Adrenal gland (tissue), 19 donors: ENCODE measurements at regions of chr20 and their contacts with region 1.

Region 1: DNA sequence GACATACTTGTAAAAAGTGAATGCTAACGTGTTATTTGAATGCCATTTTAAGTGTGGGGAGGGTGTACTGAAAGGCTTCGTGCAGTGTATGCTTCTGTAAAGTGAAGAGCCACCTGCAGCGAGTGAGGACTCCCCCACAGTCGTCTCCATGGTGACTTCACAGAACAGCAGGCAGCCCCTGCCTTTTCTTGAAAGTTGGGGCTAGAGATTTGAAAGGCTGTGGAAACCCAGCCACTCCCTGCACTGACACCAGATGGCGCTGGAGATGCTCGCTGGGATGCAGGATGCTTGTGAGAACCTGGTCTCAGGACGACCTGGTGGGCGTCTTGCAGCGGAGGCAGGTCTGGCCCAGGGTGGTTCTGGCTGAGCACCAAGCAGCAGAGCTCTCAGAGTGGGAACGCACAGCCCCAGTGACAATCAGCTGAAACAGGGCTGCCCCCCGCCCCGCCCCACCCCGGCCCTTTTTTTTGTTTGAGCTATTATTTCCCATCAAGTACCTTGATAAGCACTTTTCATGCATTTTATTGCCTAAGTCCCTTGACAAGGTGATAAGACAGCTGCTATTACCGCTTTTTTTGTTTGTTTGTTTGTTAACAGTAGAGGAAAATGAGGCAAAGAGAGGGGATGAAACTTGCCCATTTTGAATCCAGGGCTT is 150.3 kb downstream of the SYCP2 start:
- DNase-seq: peak in 6 of 7 donors; percentile 35 to 75 (median 41)
- H3K4me3 ChIP-seq: no peak overlapping the region
- H3K27ac ChIP-seq: no peak overlapping the region
- H3K4me1 ChIP-seq: no peaks in the 10 kb centered on the region
- H3K27me3 ChIP-seq: peaks cover 3% of the 10 kb centered on the region
- CTCF ChIP-seq: peak in 5 of 6 experiments; percentile 51 to 73 (median 61)
- POLR2A ChIP-seq: no peak

Region 2: DNA sequence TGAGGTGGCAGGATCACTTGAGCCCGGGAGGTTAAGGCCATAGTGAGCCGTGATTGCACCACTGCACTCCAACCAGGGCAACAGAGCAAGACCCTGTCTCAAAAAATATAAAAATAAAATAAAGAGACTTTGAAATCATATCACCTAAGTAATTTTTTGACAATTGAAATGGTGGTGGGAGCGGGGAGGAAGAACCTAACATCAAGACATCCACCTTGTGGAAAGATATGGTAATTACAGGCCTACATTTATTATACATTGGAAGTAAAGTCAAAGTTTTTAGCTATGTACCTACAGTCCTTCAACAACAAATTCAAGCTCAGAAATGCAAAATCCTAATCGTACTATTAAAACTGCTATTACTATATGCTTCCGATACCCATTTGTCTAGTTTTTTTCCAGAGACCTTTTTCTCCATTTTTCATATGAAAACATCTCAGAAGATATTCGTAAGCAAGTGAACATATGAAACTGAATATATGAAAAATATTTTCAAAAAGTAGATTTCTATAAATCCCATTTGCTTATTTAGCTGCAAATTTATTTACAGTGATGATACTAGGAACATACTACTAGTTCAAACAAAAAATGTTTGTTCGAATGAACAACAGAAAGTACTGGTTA is 67.0 kb after region 1 on chr20:
- intact Hi-C with region 1: loop called (anchors 5 kb)
- DNase-seq: no peak
- H3K4me3 ChIP-seq: no peak overlapping the region
- H3K27ac ChIP-seq: no peak overlapping the region
- H3K4me1 ChIP-seq: no peaks in the 10 kb centered on the region
- H3K27me3 ChIP-seq: no peaks in the 10 kb centered on the region
- CTCF ChIP-seq: peak; percentile 47 to 76 (median 58)
- POLR2A ChIP-seq: no peak